Heart right ventricle (tissue), 16 donors: ENCODE measurements at regions of chr6 and their contacts with region 1.

Region 1: GRCh38 chr6:113397236-113397635 is 459.9 kb upstream of the MARCKS start:
- DNase-seq: no peak
- ATAC-seq: no peak
- H3K4me3 ChIP-seq: no peak overlapping the region
- H3K27ac ChIP-seq: no peak overlapping the region
- H3K4me1 ChIP-seq: peaks cover 0 to 16% (median 0%) of the 10 kb centered on the region in 9 donors
- H3K27me3 ChIP-seq: no peaks in the 10 kb centered on the region
- CTCF ChIP-seq: no peak

Region 2: DNA sequence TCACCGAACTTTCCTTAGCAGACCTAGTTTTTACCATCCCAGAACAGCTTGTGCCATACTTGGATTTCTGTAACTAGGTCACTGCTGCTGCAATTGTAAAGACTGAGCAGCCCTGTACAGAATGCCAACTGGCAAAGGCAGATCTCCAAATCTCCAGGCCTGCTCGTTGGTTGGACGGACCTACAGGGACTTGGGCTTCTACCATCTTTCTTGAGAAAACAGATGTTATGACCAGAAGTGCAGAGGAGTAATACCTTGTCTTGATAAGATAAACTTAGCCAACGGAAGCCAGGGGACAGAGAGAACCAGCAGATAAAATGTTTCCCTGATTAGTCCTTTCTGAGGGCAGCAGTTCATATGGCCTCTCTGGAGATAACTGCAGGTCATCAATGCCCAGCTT is 746.0 kb before region 1 on chr6:
- intact Hi-C with region 1: no loop called
- DNase-seq: no peak
- ATAC-seq: peak in 2 of 8 donors; percentile 60 to 75
- H3K4me3 ChIP-seq: no peak overlapping the region
- H3K27ac ChIP-seq: peak overlapping the region in 1 of 10 donors; percentile 23
- H3K4me1 ChIP-seq: peaks cover 0 to 17% (median 0%) of the 10 kb centered on the region in 9 donors
- H3K27me3 ChIP-seq: no peaks in the 10 kb centered on the region
- CTCF ChIP-seq: no peak

Region 3: DNA sequence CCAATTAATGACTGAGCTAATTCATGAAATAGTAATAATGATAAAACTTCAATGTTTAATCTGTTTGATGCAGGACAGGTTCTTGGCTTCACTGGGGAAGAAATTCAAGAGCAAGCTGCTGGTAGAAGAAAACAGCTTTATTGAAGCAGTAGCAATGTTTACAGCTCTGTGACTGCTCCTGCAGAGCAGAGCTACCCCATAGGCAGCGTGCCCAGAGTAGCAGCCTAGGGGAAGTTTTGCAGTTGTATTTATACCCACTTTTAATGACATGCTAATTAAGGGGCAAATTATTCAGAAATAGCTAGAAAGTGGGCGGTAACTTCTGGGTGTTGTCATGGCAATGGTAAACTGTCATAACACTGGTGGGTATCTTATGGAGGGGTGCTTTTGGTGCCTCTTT is 532.1 kb before region 1 on chr6:
- intact Hi-C with region 1: loop called in 1 of 10 experiments (anchors 10 kb)
- DNase-seq: no peak
- ATAC-seq: no peak
- H3K4me3 ChIP-seq: no peak overlapping the region
- H3K27ac ChIP-seq: no peak overlapping the region
- H3K4me1 ChIP-seq: no peaks in the 10 kb centered on the region
- H3K27me3 ChIP-seq: no peaks in the 10 kb centered on the region
- CTCF ChIP-seq: no peak